Caco-2 (cell line): ENCODE measurements at regions of chr7 and their contacts with region 1.

Region 1: DNA sequence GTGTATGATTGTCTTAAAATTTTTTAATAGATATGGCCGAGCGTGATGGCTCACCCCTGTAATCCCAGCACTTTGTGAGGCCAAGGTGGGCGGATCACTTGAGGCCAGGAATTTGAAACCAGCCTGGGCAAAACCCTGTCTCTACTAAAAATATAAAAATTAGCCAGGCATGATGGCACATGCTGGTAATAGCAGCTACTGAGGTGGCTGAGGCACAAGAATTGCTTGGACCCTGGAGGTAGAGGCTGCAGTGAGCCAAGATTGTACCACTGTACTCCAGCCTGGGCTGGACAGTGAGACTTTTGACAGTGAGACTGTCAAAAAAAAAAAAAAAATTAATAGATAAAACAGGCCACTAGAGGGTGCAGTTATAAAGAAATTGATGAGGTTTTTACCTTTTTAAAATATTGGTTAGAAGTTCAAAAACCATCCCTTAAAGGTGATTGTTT is 20.5 kb downstream of the NOM1 start:
- DNase-seq: peak in 1 of 2 experiments; percentile 26
- H3K4me3 ChIP-seq: no peak overlapping the region
- H3K4me3 Mint-ChIP-seq: no peak overlapping the region
- H3K27ac Mint-ChIP-seq: no peak overlapping the region
- H3K4me1 ChIP-seq: no peaks in the 10 kb centered on the region
- H3K4me1 Mint-ChIP-seq: no peaks in the 10 kb centered on the region
- H3K27me3 ChIP-seq: no peaks in the 10 kb centered on the region
- H3K27me3 Mint-ChIP-seq: no peaks in the 10 kb centered on the region
- CTCF ChIP-seq: peak; percentile 22 to 49

Region 2: GRCh38 chr7:157228864-157229422 is 258.9 kb after region 1 on chr7:
- CTCF ChIA-PET with region 1: interaction called, 4 read pairs
- POLR2A ChIA-PET with region 1: no interaction called
- intact Hi-C with region 1: loop called (anchors 5 kb)
- DNase-seq: peak; percentile 48 to 53
- H3K4me3 ChIP-seq: no peak overlapping the region
- H3K4me3 Mint-ChIP-seq: no peak overlapping the region
- H3K27ac Mint-ChIP-seq: no peak overlapping the region
- H3K4me1 ChIP-seq: no peaks in the 10 kb centered on the region
- H3K4me1 Mint-ChIP-seq: no peaks in the 10 kb centered on the region
- H3K27me3 ChIP-seq: no peaks in the 10 kb centered on the region
- H3K27me3 Mint-ChIP-seq: no peaks in the 10 kb centered on the region
- CTCF ChIP-seq: peak in 1 of 2 experiments; percentile 56

Region 3: DNA sequence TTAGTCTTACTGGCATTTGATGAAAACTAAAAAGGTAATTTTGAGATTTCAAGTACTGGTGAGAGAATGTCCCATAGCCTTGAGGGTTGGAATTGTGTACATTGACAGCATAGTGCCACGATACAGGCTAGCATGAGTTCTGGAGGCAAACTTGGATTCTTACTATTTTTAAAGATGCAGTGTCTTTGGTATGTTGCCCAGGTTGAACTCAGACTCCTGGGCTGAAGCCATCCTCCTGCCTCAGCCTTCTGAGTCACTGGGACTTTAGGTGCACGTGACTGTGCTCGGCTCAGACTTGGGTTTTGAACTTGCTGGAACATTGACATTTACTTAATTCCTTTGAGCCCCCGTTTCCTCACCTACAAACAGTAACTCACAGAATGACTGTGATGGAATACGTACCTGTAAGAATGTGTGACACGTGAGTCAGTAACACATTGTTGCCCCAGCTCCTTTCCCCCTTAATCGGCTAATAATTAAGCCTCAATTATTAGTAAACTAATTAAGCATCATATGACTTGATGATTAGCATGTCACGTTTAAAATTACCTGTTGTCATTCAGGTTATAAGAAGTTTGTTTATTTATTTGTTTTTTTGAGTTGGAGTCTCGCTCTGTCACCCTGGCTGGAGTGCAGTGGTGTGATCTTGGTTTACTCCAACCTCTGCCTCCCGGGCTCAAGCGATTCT is 377.4 kb after region 1 on chr7:
- CTCF ChIA-PET with region 1: no interaction called
- POLR2A ChIA-PET with region 1: no interaction called
- intact Hi-C with region 1: no loop called
- DNase-seq: no peak
- H3K4me3 ChIP-seq: no peak overlapping the region
- H3K4me3 Mint-ChIP-seq: no peak overlapping the region
- H3K27ac Mint-ChIP-seq: no peak overlapping the region
- H3K4me1 ChIP-seq: no peaks in the 10 kb centered on the region
- H3K4me1 Mint-ChIP-seq: peaks cover 9% of the 10 kb centered on the region
- H3K27me3 ChIP-seq: no peaks in the 10 kb centered on the region
- H3K27me3 Mint-ChIP-seq: no peaks in the 10 kb centered on the region
- CTCF ChIP-seq: no peak